H1 (cell line): ENCODE measurements at regions of chr7 and their contacts with region 1.

Region 1: DNA sequence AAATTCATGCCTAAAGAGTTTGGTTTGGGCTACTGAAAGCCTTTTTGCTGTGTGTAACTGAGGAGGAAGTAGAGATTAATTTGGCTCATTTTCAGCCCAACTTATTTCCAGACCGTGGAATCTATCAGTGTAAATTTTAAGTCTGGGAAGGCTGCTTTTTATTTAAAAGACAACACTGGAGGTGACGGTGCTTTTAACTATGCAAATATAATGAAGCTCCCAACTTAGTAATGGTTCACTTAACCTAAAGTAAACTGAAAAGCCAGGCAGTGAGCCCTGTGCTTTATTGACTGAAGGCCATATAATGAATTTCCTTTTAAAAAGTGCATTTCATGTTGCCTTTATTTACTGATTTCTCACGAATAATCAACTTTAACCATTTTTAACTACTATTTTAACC is 127.2 kb downstream of the NPY start:
- DNase-seq: no peak
- H3K4me3 ChIP-seq: no peak overlapping the region
- H3K27ac ChIP-seq: no peak overlapping the region
- H3K4me1 ChIP-seq: peaks cover 2 to 6% (median 5%) of the 10 kb centered on the region in 4 experiments; a peak in 4 of 7 replicates
- H3K27me3 ChIP-seq: no peaks in the 10 kb centered on the region
- CTCF ChIP-seq: no peak
- EP300 ChIP-seq: no peak
- POLR2A ChIP-seq: no peak
- RAD21 ChIP-seq: no peak

Region 2: GRCh38 chr7:24318326-24318725 is 92.9 kb before region 1 on chr7:
- CTCF ChIA-PET with region 1: interaction called, 6 read pairs
- POLR2A ChIA-PET with region 1: interaction called, 10 read pairs
- DNase-seq: peak in 1 of 2 experiments; percentile 10
- H3K4me3 ChIP-seq: no peak overlapping the region
- H3K27ac ChIP-seq: no peak overlapping the region
- H3K4me1 ChIP-seq: peaks cover 0 to 6% (median 2%) of the 10 kb centered on the region in 4 experiments; a peak in 2 of 7 replicates
- H3K27me3 ChIP-seq: no peaks in the 10 kb centered on the region
- CTCF ChIP-seq: peak; percentile 75 to 94 (median 78)
- EP300 ChIP-seq: no peak
- POLR2A ChIP-seq: no peak
- RAD21 ChIP-seq: peak; percentile 96 to 97

Region 3: DNA sequence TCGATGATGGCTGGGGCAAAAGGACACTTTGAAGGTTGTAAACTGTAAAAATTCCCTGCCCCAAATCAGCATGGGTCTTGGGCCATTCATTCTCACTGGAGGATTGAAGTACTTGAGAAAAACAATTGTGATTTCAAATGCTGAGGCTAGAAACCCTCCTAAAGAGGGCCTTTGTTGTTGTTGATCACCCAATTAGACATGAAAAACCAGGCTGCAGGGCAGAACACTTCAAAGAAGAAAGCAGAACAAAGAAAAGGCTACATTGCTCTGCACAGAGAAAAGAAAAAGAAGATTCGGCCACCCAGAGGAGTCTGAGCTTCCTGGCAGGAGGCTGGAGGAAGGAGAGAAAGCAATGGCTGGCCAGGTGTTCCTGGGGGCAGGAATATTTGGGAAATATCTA is 15.8 kb after region 1 on chr7:
- CTCF ChIA-PET with region 1: interaction called, 3 read pairs
- POLR2A ChIA-PET with region 1: interaction called, 20 read pairs
- DNase-seq: peak in 1 of 2 experiments; percentile 43
- H3K4me3 ChIP-seq: peak overlapping the region in 1 of 4 experiments; percentile 35; a peak in 1 of 8 replicates
- H3K27ac ChIP-seq: no peak overlapping the region
- H3K4me1 ChIP-seq: peaks cover 3 to 26% (median 16%) of the 10 kb centered on the region in 4 experiments; a peak in 6 of 7 replicates
- H3K27me3 ChIP-seq: peaks cover 0 to 7% (median 1%) of the 10 kb centered on the region in 4 experiments; a peak in 3 of 7 replicates
- CTCF ChIP-seq: no peak
- EP300 ChIP-seq: no peak
- POLR2A ChIP-seq: no peak
- RAD21 ChIP-seq: 0 out of 4 replicates have a peak, but pooled peaks of 1 of the 2 experiments have one; percentile 10

Region 4: GRCh38 chr7:24434972-24435371 is 23.7 kb after region 1 on chr7:
- CTCF ChIA-PET with region 1: no interaction called
- POLR2A ChIA-PET with region 1: interaction called, 20 read pairs
- DNase-seq: peak; percentile 62 to 82
- H3K4me3 ChIP-seq: peak overlapping the region in 1 of 4 experiments; percentile 25; a peak in 2 of 8 replicates
- H3K27ac ChIP-seq: no peak overlapping the region
- H3K4me1 ChIP-seq: peaks cover 5 to 42% (median 33%) of the 10 kb centered on the region in 4 experiments; a peak in 6 of 7 replicates
- H3K27me3 ChIP-seq: peaks cover 0 to 3% (median 0%) of the 10 kb centered on the region in 4 experiments; a peak in 1 of 7 replicates
- CTCF ChIP-seq: no peak
- EP300 ChIP-seq: peak in 1 of 2 experiments; percentile 58; a peak in 1 of 3 replicates
- POLR2A ChIP-seq: no peak
- RAD21 ChIP-seq: no peak

Region 5: DNA sequence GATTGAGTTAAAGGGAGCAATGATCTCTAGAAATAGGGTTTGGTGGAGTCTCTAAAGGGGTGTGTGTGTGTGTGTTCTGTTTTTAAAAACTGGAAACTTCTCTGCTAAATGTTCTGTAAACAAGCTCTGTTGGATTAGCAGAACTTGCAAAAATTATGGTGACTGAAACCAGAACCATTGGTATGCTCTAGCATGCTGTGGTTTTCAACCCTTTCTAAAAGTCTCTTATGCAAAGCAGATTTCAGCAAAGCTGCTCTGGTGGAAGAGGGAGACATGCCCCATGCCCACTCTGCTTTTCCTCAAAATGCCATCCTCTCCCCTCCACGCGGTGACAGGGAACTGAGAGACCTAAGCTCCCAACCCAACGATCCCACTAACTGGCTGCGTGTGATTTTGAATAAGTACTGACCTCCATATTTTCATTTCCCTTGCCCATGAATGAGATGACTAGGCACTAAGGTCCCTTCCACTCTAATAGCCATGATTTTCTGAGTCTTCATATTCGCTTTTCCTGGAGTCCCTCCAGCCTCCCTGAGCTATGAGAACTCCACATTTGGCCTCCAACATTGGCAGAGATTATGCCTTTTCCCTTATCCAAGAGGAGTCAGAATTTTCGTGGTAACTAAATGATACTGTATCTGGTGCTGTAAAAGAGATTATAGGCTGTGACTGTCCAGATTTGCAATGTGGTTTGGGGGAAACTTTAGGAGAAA is 44.7 kb after region 1 on chr7:
- CTCF ChIA-PET with region 1: no interaction called
- POLR2A ChIA-PET with region 1: interaction called, 15 read pairs
- DNase-seq: no peak
- H3K4me3 ChIP-seq: no peak overlapping the region
- H3K27ac ChIP-seq: no peak overlapping the region
- H3K4me1 ChIP-seq: no peaks in the 10 kb centered on the region; a peak in 1 of 7 replicates
- H3K27me3 ChIP-seq: peaks cover 0 to 3% (median 0%) of the 10 kb centered on the region in 4 experiments; a peak in 1 of 7 replicates
- CTCF ChIP-seq: no peak
- EP300 ChIP-seq: no peak
- POLR2A ChIP-seq: no peak
- RAD21 ChIP-seq: no peak

Region 6: DNA sequence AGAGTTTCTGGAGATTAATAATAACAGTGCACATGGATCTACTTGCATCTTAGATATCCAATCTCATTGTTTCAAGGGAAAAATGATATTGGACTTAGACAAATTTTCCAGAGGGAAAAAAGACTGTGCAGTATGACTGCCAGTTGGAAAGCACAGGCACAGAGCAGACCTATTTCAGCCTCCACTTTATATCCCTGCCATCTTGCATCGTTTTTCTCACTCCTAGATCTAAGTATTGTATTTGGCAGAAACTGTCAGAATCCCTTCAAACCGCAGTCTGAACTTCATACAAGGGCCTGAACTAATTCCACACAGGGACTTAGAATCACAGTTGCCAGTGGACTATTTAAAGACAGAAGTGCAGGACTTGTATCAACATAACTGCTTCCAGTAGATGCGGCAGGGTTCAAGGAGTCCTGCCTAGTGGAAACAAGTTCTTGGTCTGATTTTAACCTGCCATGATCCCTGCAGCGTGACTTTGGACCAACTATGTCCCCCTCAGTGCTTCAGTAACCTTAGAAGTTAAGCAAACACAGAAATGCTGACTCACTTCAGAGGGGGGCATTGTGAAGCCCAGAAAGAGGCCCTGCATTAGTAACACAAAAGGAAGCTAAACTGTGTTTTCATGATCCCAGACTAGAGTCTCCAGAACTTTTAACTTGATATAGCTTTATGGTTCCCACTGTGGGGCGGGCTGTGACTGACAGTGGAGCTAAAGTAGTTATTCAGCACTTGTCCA is 66.3 kb after region 1 on chr7:
- CTCF ChIA-PET with region 1: interaction called, 3 read pairs
- POLR2A ChIA-PET with region 1: interaction called, 16 read pairs
- DNase-seq: peak in 1 of 2 experiments; percentile 49
- H3K4me3 ChIP-seq: peak overlapping the region in 1 of 4 experiments; percentile 28; a peak in 1 of 8 replicates
- H3K27ac ChIP-seq: no peak overlapping the region
- H3K4me1 ChIP-seq: peaks cover 1 to 14% (median 9%) of the 10 kb centered on the region in 4 experiments; a peak in 6 of 7 replicates
- H3K27me3 ChIP-seq: no peaks in the 10 kb centered on the region; a peak in 1 of 7 replicates
- CTCF ChIP-seq: no peak
- EP300 ChIP-seq: peak in 1 of 2 experiments; percentile 78; a peak in 1 of 3 replicates
- POLR2A ChIP-seq: no peak
- RAD21 ChIP-seq: peak in 1 of 2 experiments; percentile 23; a peak in 1 of 4 replicates

Region 7: DNA sequence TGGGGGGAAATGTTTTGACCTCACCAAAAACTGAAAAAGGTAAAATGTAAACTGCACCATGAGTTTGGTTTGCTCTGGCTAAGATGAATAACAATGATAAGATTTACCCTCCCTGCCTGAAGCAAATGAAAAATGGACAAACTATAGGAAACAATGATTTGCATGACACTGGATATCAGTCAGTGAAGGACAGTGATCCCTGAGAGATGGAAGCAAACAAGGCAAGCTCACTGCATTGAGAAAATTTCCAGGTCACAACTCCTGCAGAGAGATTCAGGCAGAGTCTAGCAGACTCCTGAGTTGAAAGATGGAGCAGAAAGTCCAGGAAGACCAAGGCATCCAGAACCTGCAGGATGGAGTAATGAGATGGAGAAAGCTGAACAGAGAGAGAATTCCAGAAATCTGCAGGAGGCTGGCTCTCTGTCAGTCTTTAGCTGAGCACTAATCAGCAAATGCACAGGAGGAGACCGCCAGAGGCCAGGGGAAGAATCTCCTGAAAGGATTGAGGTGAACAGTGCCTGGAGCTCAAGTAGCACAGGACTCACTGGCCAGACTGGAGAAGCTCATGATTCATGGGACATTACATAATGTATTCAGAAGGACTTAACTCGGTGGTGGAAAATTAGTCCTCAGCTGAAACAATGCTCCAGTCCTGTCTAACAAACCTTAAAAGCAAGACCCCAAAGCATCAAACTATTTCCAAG is 110.8 kb after region 1 on chr7:
- CTCF ChIA-PET with region 1: no interaction called
- POLR2A ChIA-PET with region 1: no interaction called
- DNase-seq: no peak
- H3K4me3 ChIP-seq: peak overlapping the region in 2 of 4 experiments; percentile 2 to 4; a peak in 1 of 8 replicates
- H3K27ac ChIP-seq: no peak overlapping the region
- H3K4me1 ChIP-seq: peaks cover 2 to 9% (median 4%) of the 10 kb centered on the region in 4 experiments; a peak in 4 of 7 replicates
- H3K27me3 ChIP-seq: no peaks in the 10 kb centered on the region
- CTCF ChIP-seq: no peak
- EP300 ChIP-seq: no peak
- POLR2A ChIP-seq: no peak
- RAD21 ChIP-seq: no peak

Region 8: DNA sequence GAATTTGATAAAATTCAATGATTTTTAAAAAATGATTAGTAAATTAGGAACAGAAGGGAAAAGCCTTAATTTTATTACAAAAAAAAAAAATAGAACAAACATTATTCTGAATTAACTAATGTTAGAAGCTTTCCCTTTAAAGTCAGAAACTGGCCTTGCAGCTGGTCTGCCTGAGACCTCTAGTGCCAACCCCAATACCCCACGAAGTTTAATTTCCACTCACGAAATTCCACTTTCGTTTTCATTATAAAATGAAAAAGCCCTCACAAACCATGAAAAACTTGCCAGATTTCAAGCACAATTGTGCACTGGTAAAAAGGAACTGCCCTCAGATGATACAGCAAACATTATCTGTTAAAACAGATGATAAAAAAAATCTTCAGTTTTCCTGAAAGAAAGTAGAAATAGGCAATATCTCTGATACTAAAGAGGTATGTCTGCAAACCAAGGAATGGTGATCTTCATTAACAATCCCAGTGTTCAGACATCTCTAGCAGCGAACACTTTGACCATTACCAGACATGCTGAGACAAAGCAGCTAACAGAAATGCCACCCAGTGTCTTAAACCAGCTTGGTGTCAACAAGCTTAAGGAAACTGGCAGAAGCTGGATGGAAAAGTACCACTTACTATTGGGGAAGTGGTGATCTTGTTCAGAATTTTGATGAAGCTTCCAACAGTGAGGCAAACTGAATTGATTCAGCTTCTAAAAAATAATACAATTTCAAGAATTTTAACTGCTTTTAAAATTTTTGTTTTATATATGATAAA is 242.3 kb after region 1 on chr7:
- CTCF ChIA-PET with region 1: no interaction called
- POLR2A ChIA-PET with region 1: no interaction called
- DNase-seq: no peak
- H3K4me3 ChIP-seq: no peak overlapping the region
- H3K27ac ChIP-seq: peak overlapping the region; percentile 3; the same call in 1 of the 2 replicates
- H3K4me1 ChIP-seq: no peaks in the 10 kb centered on the region
- H3K27me3 ChIP-seq: no peaks in the 10 kb centered on the region
- CTCF ChIP-seq: no peak
- EP300 ChIP-seq: no peak
- POLR2A ChIP-seq: no peak
- RAD21 ChIP-seq: no peak